Endothelial cell of umbilical vein (primary cell): ENCODE measurements at regions of chr10 and their contacts with region 1.

Region 1: GRCh38 chr10:76311752-76312636 is 880.6 kb downstream of the LRMDA start:
- DNase-seq: peak; percentile 32
- H3K4me3 ChIP-seq: no peak overlapping the region
- H3K27ac ChIP-seq: no peak overlapping the region
- H3K4me1 ChIP-seq: peaks cover 6% of the 10 kb centered on the region
- H3K27me3 ChIP-seq: no peaks in the 10 kb centered on the region
- CTCF ChIP-seq: peak; percentile 39 to 57
- POLR2A ChIP-seq: no peak

Region 2: GRCh38 chr10:76428551-76429367 is 116.8 kb after region 1 on chr10:
- CTCF ChIA-PET with region 1: no interaction called
- POLR2A ChIA-PET with region 1: no interaction called
- dilution Hi-C with region 1: no loop called
- intact Hi-C with region 1: loop called (anchors 10 kb)
- DNase-seq: peak; percentile 33
- H3K4me3 ChIP-seq: no peak overlapping the region
- H3K27ac ChIP-seq: no peak overlapping the region
- H3K4me1 ChIP-seq: no peaks in the 10 kb centered on the region
- H3K27me3 ChIP-seq: no peaks in the 10 kb centered on the region
- CTCF ChIP-seq: no peak
- POLR2A ChIP-seq: no peak

Region 3: GRCh38 chr10:76492026-76492425 is 180.0 kb after region 1 on chr10:
- CTCF ChIA-PET with region 1: no interaction called
- POLR2A ChIA-PET with region 1: no interaction called
- dilution Hi-C with region 1: no loop called
- intact Hi-C with region 1: loop called (anchors 5 kb)
- DNase-seq: peak; percentile 71
- H3K4me3 ChIP-seq: no peak overlapping the region
- H3K27ac ChIP-seq: peak overlapping the region; percentile 57
- H3K4me1 ChIP-seq: peaks cover 11% of the 10 kb centered on the region
- H3K27me3 ChIP-seq: no peaks in the 10 kb centered on the region
- CTCF ChIP-seq: no peak
- POLR2A ChIP-seq: no peak

Region 4: GRCh38 chr10:76523246-76523645 is 211.3 kb after region 1 on chr10:
- CTCF ChIA-PET with region 1: no interaction called
- POLR2A ChIA-PET with region 1: no interaction called
- dilution Hi-C with region 1: no loop called
- intact Hi-C with region 1: no loop called
- DNase-seq: peak; percentile 74
- H3K4me3 ChIP-seq: no peak overlapping the region
- H3K27ac ChIP-seq: no peak overlapping the region
- H3K4me1 ChIP-seq: no peaks in the 10 kb centered on the region
- H3K27me3 ChIP-seq: no peaks in the 10 kb centered on the region
- CTCF ChIP-seq: no peak
- POLR2A ChIP-seq: no peak